H1 (cell line): ENCODE measurements at regions of chr1 and their contacts with region 1.

Region 1: DNA sequence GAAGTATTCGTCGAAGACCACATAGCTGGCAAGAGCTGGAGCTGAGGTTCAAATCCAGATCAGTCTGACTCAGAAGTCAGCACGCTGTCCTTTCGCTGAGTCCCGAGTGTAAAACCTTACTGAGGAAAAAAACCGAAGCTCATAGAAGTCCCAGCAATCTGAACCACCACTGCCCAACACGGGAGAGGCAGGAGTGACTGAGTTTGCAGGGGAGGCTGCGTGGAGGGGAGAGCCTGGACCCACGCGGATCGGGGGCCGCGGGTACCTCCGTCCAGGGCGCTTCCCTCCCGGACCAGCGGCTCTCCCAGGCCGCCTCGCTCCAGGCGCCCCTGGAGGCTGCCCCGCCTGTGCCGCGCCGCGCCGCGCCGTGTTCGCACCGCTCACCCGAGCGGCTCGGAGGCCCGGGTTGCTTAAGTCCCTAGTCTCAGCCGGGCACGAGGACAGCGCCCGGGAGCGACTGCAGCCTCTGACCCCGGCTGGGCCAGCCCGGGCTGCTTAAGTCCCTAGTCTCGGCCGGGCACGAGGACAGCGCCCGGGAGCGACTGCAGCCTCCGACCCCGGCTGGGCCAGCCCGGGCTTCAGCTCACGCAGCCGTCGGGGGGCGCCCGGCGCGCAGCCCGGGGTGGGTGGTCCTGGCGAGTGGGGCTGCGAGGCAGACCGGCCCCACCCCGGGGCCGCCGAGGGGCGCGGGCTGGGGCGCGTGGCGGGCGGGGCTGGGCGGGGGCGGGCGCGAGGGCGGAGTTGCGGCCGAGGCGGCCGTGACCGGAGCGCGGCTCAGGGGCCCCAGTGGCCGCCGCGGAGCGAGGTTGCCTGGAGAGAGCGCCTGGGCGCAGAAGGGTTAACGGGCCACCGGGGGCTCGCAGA is at the start of gene ADAMTSL4:
- DNase-seq: no peak
- H3K4me3 ChIP-seq: peak within 1 kb of the TSS; percentile 51 to 65 (median 53)
- H3K27ac ChIP-seq: no peak within 1 kb of the TSS
- H3K4me1 ChIP-seq: peaks cover 2 to 19% (median 11%) of the 10 kb centered on the region in 4 experiments
- H3K27me3 ChIP-seq: peaks cover 0 to 19% (median 10%) of the 10 kb centered on the region in 4 experiments; a peak in 5 of 7 replicates
- CTCF ChIP-seq: no peak
- EP300 ChIP-seq: no peak
- POLR2A ChIP-seq: no peak
- RAD21 ChIP-seq: no peak
- total RNA-seq, gene ADAMTSL4: 5.3 and 5.4 TPM in 2 replicates

Region 2: DNA sequence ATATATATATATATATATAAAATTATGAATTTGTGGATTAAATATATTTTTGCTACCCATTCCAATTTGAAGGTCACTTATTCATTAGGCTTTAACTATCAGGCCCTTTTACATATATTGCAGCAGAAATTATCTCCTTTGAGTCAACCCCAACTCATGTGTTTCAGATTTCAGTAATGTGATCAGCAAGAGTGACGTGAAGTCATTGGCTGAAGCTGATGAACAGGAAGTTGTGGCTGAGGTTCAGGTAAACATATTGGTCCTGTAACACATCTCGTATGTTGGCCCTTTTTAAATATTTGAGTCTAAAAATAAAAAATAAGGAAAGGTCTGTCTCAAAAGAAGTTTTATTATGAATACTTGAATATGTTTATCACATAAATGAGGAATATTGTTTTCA is 472.8 kb before region 1 on chr1:
- CTCF ChIA-PET with region 1: no interaction called
- POLR2A ChIA-PET with region 1: no interaction called
- DNase-seq: no peak
- H3K4me3 ChIP-seq: no peak overlapping the region
- H3K27ac ChIP-seq: no peak overlapping the region
- H3K4me1 ChIP-seq: no peaks in the 10 kb centered on the region
- H3K27me3 ChIP-seq: no peaks in the 10 kb centered on the region
- CTCF ChIP-seq: no peak
- EP300 ChIP-seq: no peak
- POLR2A ChIP-seq: no peak
- RAD21 ChIP-seq: no peak

Region 3: DNA sequence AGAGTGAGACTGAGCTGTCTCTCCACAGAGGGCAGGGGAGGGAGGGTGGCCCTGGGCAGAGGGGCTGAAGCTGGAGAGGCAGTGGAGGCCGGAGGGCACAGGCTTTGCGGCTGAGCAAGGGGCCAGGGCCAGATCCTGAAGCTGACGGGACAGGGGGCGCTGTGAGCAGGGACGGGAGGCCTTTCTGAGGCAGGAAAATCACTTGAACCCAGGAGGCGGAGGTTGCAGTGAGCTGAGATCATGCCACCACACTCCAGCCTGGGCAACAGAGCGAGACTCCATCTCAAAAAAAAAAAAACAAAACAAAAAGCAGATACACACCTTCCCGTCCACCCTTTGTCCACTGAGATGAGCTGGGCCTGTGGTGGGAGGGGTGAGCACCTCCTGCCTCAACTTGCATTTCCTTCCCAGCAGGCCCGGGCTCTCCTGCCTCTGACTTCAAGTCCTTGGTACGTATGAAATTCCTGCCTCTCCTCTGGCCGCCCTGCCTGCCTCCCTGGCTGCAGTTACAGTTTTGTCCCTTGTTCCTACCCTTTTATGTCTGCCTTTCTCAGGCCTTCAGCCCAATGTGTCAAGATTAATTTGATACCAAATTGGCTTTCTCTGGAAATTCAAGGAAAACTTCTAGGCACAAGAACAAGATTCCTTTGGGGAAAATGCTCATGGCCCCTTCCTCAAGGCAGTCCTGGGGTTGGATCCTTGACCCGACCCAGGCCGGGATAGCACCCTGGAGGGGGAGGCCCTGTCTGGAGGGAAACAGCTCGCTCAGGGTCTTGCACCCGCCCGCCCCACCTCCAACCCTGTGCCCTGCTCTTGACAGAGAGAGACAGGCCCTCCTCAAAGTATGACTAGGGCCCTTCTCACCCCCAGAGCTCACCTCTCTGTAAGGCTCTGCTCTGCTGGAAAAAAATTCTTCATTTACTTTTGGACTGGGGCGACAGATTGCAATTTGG is 10.9 kb before region 1 on chr1:
- CTCF ChIA-PET with region 1: interaction called, 28 read pairs
- POLR2A ChIA-PET with region 1: interaction called, 39 read pairs
- DNase-seq: peak in 1 of 2 experiments; percentile 82
- H3K4me3 ChIP-seq: no peak overlapping the region
- H3K27ac ChIP-seq: no peak overlapping the region; the same call in 1 of the 2 replicates
- H3K4me1 ChIP-seq: peaks cover 0 to 8% (median 3%) of the 10 kb centered on the region in 4 experiments; a peak in 6 of 7 replicates
- H3K27me3 ChIP-seq: no peaks in the 10 kb centered on the region
- CTCF ChIP-seq: peak; percentile 43 to 62 (median 45)
- EP300 ChIP-seq: no peak
- POLR2A ChIP-seq: no peak
- RAD21 ChIP-seq: peak; percentile 26 to 40; a peak in 3 of 4 replicates

Region 4: DNA sequence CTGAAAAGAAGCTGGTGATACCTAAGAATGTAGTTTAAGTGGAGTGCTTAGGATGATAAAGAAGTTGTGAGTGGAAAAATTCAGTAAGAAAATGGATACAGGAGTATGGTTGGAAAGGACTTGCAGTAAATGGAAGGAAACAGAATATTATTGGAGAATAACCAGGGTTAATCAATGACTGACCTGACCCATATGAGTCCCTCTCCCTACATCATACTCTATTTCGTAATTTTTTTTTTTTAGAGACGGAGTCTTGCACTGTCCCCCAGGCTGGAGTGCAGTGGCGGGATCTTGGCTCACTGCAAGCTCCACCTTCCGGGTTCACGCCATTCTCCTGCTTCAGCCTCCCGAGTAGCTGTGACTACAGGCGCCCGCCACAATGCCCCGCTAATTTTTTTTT is 113.9 kb after region 1 on chr1:
- CTCF ChIA-PET with region 1: no interaction called
- POLR2A ChIA-PET with region 1: no interaction called
- DNase-seq: no peak
- H3K4me3 ChIP-seq: no peak overlapping the region
- H3K27ac ChIP-seq: no peak overlapping the region
- H3K4me1 ChIP-seq: no peaks in the 10 kb centered on the region
- H3K27me3 ChIP-seq: no peaks in the 10 kb centered on the region
- CTCF ChIP-seq: no peak
- EP300 ChIP-seq: no peak
- POLR2A ChIP-seq: no peak
- RAD21 ChIP-seq: no peak